Activated T-helper 2 cell treated with anti-CD3 and anti-CD28 coated beads, Interferon-gamma antibody, Interleukin-2, Interleukin-4, amounts not matched to agents 10 μg/mL and 5 μg/mL and 100 μg/mL, durations not matched to agents 14 hours and 24 hours and 36 hours (primary cell): ENCODE measurements at regions of chr6 and their contacts with region 1.

Region 1: DNA sequence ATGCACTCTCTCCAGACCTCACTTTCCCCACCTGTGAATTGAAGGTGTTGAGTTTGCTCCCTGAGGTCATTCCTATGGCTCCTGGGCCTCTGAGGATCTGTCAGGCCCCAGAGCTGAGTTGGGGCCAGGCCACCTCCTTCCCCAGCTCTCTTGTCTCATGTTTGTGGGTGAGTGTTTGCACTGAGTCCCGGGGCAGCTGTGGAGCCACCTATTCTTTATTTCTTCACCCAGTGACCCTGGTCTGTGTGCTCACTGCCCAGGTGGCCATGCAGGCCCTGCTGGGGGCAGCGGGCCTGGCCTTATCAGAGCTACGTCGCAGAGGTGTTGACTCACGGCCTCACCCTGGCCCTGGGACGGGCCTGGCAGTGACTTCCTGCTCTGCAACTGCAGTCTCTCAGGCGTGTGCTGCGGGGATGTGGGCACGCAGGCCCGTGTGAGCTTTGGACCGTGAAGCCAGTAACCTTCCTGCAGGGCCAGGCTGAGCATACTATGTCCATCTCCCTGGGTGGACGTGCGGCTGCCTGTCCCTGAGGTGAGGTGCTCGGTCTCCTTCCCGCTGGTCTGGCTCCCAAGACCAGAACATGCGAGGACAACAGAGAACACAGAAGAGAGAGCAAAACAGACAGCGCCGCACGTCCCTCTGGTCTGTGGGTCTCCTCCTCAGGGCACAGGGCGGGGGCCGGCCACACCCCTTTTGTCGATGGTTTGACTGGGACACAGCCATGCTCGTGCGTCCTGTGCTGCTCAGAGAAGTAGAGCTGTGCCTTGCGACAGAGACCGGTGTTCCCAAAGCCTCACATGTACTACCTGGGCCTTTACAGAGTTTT is 12.1 kb downstream of the TMEM181 start:
- DNase-seq: no peak
- H3K4me3 Mint-ChIP-seq: no peak overlapping the region
- H3K27ac Mint-ChIP-seq: no peak overlapping the region
- H3K4me1 Mint-ChIP-seq: peaks cover 59% of the 10 kb centered on the region
- H3K27me3 Mint-ChIP-seq: no peaks in the 10 kb centered on the region

Region 2: DNA sequence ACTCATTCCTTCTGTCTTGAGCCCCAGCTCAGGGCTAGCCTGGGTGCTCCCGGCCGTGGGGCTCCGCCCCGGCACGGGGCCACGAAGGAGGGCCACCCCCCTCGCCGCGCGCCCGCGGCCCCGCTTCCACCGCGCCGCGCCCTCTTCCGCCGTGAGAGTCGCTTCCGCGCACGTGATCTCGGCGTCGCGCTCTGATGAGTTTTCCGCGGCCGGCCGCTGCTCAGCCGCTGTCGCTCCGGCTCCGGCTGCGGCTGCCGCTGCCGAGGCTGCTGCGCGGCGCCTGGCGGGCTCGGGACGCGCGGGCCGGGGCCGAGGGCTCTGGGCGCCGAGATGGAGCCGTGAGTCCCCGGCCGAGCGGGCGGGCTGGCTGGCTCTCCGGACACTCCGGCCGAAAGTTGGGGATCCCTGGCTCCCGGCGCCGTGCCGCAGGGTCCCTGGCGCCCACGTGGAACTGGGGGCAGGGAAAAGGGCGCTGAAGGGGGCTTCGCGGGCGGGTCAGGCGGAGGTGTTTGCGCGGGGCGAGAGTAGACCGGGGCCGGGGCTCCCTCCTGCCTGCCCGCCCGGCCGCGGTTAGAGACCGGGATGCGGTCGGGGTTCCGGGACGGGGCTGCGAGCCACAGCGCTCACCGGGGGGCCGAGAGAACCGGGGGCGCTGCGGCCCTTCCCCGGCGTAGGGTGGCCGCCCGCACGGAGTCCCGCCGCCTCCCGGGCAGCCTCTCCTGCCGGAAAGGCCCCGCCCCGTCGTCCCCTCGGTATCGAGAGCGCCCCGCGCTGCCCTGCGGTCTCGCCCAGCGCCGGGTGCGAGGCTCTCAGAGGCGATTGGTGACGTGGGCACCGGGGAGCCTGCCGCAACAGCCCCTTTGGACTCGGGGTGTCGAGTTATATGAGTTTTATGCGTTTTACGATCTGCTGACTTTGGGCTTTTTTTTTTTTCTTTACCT is 11.9 kb before region 1 on chr6 and contains the start of gene TMEM181:
- intact Hi-C with region 1: loop called (anchors 1 kb)
- DNase-seq: peak; percentile 83
- H3K4me3 Mint-ChIP-seq: peak within 1 kb of the TSS; percentile 97
- H3K27ac Mint-ChIP-seq: peak within 1 kb of the TSS; percentile 95
- H3K4me1 Mint-ChIP-seq: peaks cover 38% of the 10 kb centered on the region
- H3K27me3 Mint-ChIP-seq: peaks cover 6% of the 10 kb centered on the region
- total RNA-seq, gene TMEM181: 16.3 and 16.9 TPM in 2 replicates

Region 3: GRCh38 chr6:158697811-158698210 is 125.8 kb after region 1 on chr6:
- intact Hi-C with region 1: no loop called
- DNase-seq: no peak
- H3K4me3 Mint-ChIP-seq: no peak overlapping the region
- H3K27ac Mint-ChIP-seq: peak overlapping the region; percentile 91
- H3K4me1 Mint-ChIP-seq: peaks cover 25% of the 10 kb centered on the region
- H3K27me3 Mint-ChIP-seq: no peaks in the 10 kb centered on the region